A673 (cell line): ENCODE measurements at regions of chr19 and their contacts with region 1.

Region 1: DNA sequence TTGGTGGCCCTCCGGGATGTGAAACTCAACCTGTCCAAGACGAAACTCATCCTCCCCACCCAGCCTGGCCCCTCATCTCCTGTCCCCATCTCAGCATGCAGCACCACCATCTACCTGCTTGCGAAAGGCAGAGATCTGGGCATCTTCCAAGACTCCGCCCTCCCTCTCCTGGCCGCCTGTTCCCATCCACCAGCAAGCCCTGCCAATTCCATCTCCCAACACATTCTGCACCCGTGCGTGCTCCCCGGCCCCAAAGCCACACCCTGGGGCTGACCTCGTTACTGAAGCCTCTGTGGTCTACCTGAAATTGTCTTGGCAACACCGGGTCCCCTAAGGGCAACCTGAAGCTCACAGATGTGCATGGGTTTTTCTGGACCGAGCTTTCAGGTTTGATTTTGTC is 13.2 kb upstream of the CAMSAP3 start:
- DNase-seq: no peak
- H3K4me3 ChIP-seq: no peak overlapping the region
- H3K27ac ChIP-seq: no peak overlapping the region
- H3K4me1 ChIP-seq: no peaks in the 10 kb centered on the region
- H3K27me3 ChIP-seq: peaks cover 30% of the 10 kb centered on the region
- CTCF ChIP-seq: no peak

Region 2: DNA sequence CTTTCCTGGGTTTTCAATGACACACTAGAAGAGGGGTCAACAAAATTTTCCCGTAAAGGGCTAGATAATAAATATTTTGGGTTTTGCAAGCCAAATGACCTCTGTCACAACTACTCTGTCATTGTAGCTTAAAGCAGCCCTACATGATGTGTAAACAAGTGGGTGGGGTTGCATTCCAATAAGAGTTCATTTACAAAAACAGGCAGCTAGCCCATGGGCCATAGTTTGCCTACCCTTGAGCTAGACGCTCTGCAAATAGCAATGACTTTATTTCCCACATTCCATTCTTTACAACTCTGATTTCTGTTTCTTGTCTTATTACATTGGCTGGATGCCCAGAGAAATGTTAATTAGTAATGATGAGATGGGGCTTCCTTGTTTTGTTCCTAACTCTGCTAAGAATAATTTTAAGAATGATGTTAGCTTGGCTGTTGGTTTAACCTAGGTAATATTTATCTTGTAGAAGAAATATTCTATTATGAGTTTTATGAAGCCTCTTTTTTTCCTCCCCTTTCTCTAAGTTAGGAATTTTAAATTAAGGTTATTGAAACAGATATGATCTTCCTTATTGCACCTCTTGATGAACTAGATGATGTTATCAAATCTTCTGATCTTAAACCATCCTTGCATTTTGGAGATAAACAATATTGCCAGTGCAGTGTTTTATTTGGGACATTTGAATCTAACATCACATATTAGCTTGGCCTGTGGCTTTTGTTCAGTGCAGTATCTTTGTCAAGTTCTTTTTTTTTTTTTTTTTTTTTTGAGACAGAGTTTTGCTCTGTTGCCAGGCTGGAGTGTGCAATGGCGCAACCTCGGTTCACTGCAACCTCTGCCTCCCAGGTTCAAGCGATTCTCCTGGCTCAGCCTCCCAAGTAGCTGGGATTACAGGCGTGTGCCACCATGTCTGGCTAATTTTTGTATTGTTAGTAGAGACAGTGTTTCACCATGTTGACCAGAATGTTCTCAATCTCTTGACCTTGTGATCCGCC is 436.7 kb before region 1 on chr19:
- CTCF ChIA-PET with region 1: no interaction called
- POLR2A ChIA-PET with region 1: no interaction called
- intact Hi-C with region 1: no loop called
- DNase-seq: no peak
- H3K4me3 ChIP-seq: no peak overlapping the region
- H3K27ac ChIP-seq: no peak overlapping the region
- H3K4me1 ChIP-seq: no peaks in the 10 kb centered on the region
- H3K27me3 ChIP-seq: no peaks in the 10 kb centered on the region
- CTCF ChIP-seq: no peak

Region 3: GRCh38 chr19:7535035-7535992 is 47.1 kb before region 1 on chr19 and contains the start of gene PNPLA6:
- CTCF ChIA-PET with region 1: no interaction called
- POLR2A ChIA-PET with region 1: no interaction called
- intact Hi-C with region 1: no loop called
- DNase-seq: peak; percentile 97
- H3K4me3 ChIP-seq: peak within 1 kb of the TSS; percentile 73
- H3K27ac ChIP-seq: peak within 1 kb of the TSS; percentile 87
- H3K4me1 ChIP-seq: no peaks in the 10 kb centered on the region
- H3K27me3 ChIP-seq: no peaks in the 10 kb centered on the region
- CTCF ChIP-seq: no peak
- total RNA-seq, gene PNPLA6: 70.4 and 73.9 TPM in 2 replicates

Region 4: GRCh38 chr19:7562646-7563393 is 19.6 kb before region 1 on chr19:
- CTCF ChIA-PET with region 1: interaction called, 11 read pairs
- POLR2A ChIA-PET with region 1: no interaction called
- intact Hi-C with region 1: no loop called
- DNase-seq: no peak
- H3K4me3 ChIP-seq: no peak overlapping the region
- H3K27ac ChIP-seq: no peak overlapping the region
- H3K4me1 ChIP-seq: no peaks in the 10 kb centered on the region
- H3K27me3 ChIP-seq: no peaks in the 10 kb centered on the region
- CTCF ChIP-seq: no peak

Region 5: DNA sequence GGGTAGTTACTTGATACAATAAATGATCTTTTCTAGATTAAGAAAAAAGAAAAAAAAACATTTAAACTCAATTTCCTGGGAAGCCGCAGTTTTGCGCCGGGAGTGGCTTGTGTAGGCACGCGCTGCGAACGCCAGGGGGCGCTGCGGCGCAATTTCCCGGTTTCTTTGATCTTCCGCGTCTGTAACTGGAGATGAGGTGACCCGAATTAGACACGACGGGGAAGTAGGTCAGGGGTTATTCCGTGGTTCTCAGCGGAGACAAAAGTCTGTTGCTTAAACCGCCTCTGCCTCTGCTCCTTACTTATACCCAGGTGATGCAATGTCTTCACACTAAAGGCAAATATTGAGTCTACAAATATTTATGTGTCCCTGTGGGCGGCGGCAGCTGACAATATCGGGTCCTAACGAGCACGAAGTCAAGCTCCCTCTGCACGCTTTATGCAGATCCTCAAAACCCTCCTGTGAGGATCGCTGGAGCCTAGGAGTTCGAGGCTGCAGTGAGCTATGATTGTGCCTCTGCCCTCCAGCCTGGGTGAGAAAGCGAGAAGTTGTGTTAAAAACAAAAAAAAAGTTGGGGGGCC is 69.7 kb after region 1 on chr19:
- CTCF ChIA-PET with region 1: no interaction called
- POLR2A ChIA-PET with region 1: no interaction called
- intact Hi-C with region 1: no loop called
- DNase-seq: peak; percentile 76
- H3K4me3 ChIP-seq: peak overlapping the region; percentile 20
- H3K27ac ChIP-seq: no peak overlapping the region
- H3K4me1 ChIP-seq: no peaks in the 10 kb centered on the region
- H3K27me3 ChIP-seq: no peaks in the 10 kb centered on the region
- CTCF ChIP-seq: peak; percentile 97

Region 6: DNA sequence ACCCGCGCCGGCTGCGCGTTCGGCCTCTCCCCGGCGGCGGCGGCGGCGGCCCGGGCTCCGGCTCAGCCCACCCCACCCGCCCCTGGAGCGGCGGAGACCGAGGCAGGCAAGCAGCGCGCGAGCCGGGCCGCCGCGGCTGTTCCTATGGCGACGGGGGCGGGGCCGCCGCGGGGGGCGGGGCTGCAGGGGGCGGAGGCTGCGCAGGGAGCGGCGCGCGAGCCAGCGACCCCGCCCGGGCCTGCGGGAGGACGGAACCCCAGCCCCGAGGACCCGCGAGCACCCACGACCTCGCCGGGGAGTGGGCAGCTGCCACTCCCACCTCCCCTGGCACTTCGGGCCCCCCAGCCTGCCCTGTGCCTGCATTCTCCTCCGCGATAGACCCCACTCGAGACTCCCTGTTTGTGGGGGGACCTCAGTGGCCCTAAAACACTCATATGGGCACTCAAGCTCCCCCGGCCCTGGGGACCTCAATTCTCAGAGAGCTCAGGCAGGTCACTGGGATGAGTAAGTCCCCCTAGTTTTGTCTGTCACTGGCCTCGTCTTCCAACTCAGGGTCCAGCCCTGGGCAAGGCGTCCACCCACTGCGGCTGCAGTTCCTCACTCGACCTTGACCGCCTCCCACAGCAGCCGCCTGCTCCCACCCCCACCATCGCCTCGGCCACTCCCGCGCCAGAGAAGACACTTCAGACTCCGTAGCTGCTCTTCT is 343.7 kb after region 1 on chr19 and contains the start of gene CTXN1:
- CTCF ChIA-PET with region 1: no interaction called
- POLR2A ChIA-PET with region 1: no interaction called
- intact Hi-C with region 1: no loop called
- DNase-seq: peak; percentile 77
- H3K4me3 ChIP-seq: peak within 1 kb of the TSS; percentile 57
- H3K27ac ChIP-seq: peak within 1 kb of the TSS; percentile 69
- H3K4me1 ChIP-seq: peaks cover 49% of the 10 kb centered on the region
- H3K27me3 ChIP-seq: no peaks in the 10 kb centered on the region
- CTCF ChIP-seq: no peak
- total RNA-seq, gene CTXN1: 71.7 and 85.5 TPM in 2 replicates